Sigmoid colon (tissue), 7 donors: ENCODE measurements at regions of chr3 and their contacts with region 1.

Region 1: GRCh38 chr3:71305231-71306206 is 278.0 kb downstream of the FOXP1 start:
- DNase-seq: no peak
- H3K4me3 ChIP-seq: peak overlapping the region; percentile 19 to 48 (median 42)
- H3K27ac ChIP-seq: peak overlapping the region; percentile 83 to 88 (median 84)
- H3K4me1 ChIP-seq: peaks cover 0 to 82% (median 48%) of the 10 kb centered on the region in 4 donors
- H3K27me3 ChIP-seq: no peaks in the 10 kb centered on the region
- CTCF ChIP-seq: no peak
- EP300 ChIP-seq: no peak
- POLR2A ChIP-seq: no peak

Region 2: GRCh38 chr3:70531063-70531657 is 774.4 kb before region 1 on chr3:
- intact Hi-C with region 1: loop called (anchors 5 kb)
- DNase-seq: no peak
- H3K4me3 ChIP-seq: no peak overlapping the region
- H3K27ac ChIP-seq: no peak overlapping the region
- H3K4me1 ChIP-seq: peaks cover 0 to 20% (median 7%) of the 10 kb centered on the region in 4 donors
- H3K27me3 ChIP-seq: no peaks in the 10 kb centered on the region
- CTCF ChIP-seq: peak; percentile 16 to 51 (median 40)
- EP300 ChIP-seq: no peak
- POLR2A ChIP-seq: no peak

Region 3: DNA sequence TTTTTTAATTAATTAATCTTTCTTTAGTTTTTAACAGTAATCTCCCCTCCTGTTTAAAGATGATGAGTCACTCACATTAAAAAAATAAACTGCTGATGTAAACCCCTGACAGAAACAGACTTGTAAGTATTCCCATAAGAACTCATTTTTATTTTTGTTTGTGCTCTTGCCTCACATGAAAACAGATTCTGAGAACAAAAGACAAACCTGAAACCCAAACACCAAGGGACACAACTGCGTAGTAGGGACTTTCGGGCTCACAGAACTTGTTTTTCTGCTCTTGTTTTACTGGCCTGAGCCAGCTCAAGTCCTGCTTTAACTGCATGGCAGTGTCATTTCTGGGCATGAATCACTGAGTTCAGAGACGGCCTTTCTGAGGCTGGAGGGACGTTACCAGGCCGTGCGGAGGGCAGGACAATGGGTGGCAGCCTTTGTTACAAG is 322.8 kb before region 1 on chr3:
- intact Hi-C with region 1: loop called (anchors 5 kb)
- DNase-seq: peak; percentile 74
- H3K4me3 ChIP-seq: peak overlapping the region in 1 of 4 donors; percentile 2
- H3K27ac ChIP-seq: peak overlapping the region; percentile 74 to 90 (median 84)
- H3K4me1 ChIP-seq: peaks cover 0 to 84% (median 80%) of the 10 kb centered on the region in 4 donors
- H3K27me3 ChIP-seq: no peaks in the 10 kb centered on the region
- CTCF ChIP-seq: no peak
- EP300 ChIP-seq: peak in 1 of 4 donors; percentile 18
- POLR2A ChIP-seq: no peak

Region 4: GRCh38 chr3:71130471-71131374 is 174.8 kb before region 1 on chr3:
- intact Hi-C with region 1: loop called (anchors 5 kb)
- DNase-seq: peak; percentile 86
- H3K4me3 ChIP-seq: peak overlapping the region; percentile 33 to 61 (median 52)
- H3K27ac ChIP-seq: peak overlapping the region; percentile 84 to 93 (median 86)
- H3K4me1 ChIP-seq: peaks cover 0 to 81% (median 55%) of the 10 kb centered on the region in 4 donors
- H3K27me3 ChIP-seq: no peaks in the 10 kb centered on the region
- CTCF ChIP-seq: no peak
- EP300 ChIP-seq: no peak
- POLR2A ChIP-seq: peak; percentile 50 to 60

Region 5: GRCh38 chr3:71201939-71202338 is 103.6 kb before region 1 on chr3:
- intact Hi-C with region 1: no loop called
- DNase-seq: peak; percentile 89
- H3K4me3 ChIP-seq: no peak overlapping the region
- H3K27ac ChIP-seq: peak overlapping the region; percentile 59 to 85 (median 78)
- H3K4me1 ChIP-seq: peaks cover 0 to 70% (median 57%) of the 10 kb centered on the region in 4 donors
- H3K27me3 ChIP-seq: no peaks in the 10 kb centered on the region
- CTCF ChIP-seq: no peak
- EP300 ChIP-seq: no peak
- POLR2A ChIP-seq: no peak

Region 6: DNA sequence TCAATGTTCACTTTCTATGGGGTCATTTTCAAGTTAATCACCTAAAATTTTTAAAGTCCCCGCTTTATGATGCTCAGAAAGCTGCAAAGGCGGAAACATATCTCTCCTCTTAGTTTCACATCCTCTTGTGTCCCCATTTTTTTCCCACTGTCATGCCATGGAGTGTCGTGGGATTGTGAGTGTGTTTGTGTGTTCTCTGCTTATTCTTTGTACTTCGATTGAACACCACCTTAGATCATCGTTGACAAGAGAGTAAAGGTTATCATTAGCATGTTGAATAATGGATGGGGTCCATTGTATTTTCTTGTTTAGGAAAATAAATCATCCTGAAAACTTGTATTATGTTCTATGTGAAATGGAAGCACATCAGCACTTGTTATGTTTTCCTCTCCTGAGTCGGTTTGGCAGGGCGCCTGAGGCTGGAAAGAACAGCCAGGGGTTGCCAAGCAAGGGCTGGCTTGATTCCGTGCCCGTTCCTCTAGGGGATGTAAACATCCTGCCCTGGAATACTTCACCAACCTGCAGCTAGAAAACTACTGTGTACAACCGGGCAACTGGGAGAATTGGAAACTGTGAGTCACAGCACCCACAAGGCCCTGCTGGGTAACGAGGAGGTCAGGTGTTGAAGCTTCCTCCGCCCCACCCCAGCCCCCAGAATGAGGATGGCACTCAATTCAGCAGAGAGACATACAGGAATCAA is 352.5 kb after region 1 on chr3:
- intact Hi-C with region 1: loop called (anchors 5 kb)
- DNase-seq: peak; percentile 97
- H3K4me3 ChIP-seq: no peak overlapping the region
- H3K27ac ChIP-seq: peak overlapping the region; percentile 75 to 83 (median 80)
- H3K4me1 ChIP-seq: peaks cover 0 to 44% (median 37%) of the 10 kb centered on the region in 4 donors
- H3K27me3 ChIP-seq: no peaks in the 10 kb centered on the region
- CTCF ChIP-seq: no peak
- EP300 ChIP-seq: peak; percentile 42 to 95 (median 70)
- POLR2A ChIP-seq: no peak